ENCODE measurements at regions of chrX and their contacts with region 1.

Region 1: DNA sequence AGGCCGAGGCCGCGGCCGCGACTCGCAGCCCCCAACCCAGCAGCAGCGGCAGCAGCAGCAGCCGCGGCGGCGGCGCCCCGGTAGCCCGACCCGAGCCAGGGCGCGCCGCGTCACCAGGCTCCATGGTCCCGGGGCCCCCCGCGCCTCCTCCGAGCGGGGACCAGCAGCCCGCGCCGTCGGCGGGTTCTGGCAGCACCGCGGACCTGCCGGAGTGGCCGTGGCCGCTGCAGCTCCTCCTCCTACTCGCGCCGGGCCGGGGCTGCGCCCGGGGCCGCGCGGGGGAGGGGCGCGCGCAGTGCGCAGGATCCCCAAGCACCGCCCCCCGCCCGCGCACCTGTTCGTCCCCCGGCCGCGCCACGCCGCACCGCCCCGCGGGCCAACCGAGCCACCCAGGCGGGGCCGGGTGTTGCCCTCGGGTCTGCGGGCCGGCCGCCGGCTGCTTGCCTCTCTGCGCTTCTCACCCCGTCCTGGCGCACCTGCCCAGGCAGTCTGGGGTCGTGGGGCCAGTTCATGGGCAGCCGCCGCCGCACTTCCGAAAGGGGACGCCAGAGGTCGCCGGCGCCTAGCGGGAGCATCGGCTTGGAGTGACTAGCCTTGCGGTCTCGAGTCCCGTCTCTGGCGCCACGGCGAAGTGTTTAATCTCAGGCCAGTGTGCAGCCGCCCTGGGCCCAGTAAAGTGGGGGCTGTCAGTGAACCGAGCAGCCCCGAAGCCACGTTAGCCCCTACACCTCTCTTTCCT is at the start of gene SLC9A7:
- DNase-seq: peak in 1 of 2 donors; percentile 83
- H3K4me3 ChIP-seq: peak within 1 kb of the TSS; percentile 59 to 67
- H3K27ac ChIP-seq: peak within 1 kb of the TSS in 1 of 2 donors; percentile 5
- H3K4me1 ChIP-seq: peaks cover 0 to 4% of the 10 kb centered on the region in 2 donors
- H3K27me3 ChIP-seq: no peaks in the 10 kb centered on the region
- CTCF ChIP-seq: peak; percentile 75 to 86 (median 83)
- total RNA-seq, gene SLC9A7: 5.5 TPM

Region 2: DNA sequence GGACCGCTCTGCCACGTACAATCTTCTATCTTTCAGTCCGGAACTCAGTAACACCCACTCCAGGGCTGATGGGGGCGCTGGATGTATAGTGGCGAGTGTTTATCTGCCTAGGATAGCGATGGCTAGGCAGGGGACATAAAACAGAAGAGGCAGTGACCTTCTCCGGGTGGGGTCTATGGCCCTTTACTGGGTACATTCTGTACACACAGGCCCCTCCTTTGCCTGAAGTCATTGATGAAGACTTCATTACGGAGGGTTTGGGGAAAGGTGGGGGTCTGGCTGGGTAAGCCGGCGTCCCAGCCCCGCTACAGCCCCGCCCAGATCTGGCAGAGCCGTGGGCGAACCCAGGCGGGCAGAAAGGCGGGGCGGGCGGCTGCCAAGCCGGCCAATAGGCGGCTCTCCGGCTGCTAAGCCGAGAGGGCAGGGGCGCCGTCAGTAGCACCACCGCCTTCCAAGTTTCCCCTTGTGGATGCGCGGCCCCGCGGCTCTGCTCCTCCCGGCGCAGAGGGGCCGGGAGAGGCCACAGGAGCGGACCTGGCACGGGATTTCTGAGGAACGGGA is 185.7 kb before region 1 on chrX and contains the start of gene CHST7:
- intact Hi-C with region 1: loop called (anchors 10 kb)
- DNase-seq: peak in 1 of 2 donors; percentile 79
- H3K4me3 ChIP-seq: peak within 1 kb of the TSS; percentile 67 to 81
- H3K27ac ChIP-seq: peak within 1 kb of the TSS; percentile 57 to 67
- H3K4me1 ChIP-seq: no peaks in the 10 kb centered on the region
- H3K27me3 ChIP-seq: no peaks in the 10 kb centered on the region
- CTCF ChIP-seq: peak; percentile 8 to 16 (median 13)
- total RNA-seq, gene CHST7: 64.6 TPM

Region 3: GRCh38 chrX:46796574-46797191 is 37.6 kb after region 1 on chrX:
- intact Hi-C with region 1: loop called (anchors 1 kb)
- DNase-seq: peak; percentile 13 to 86
- H3K4me3 ChIP-seq: no peak overlapping the region
- H3K27ac ChIP-seq: no peak overlapping the region
- H3K4me1 ChIP-seq: no peaks in the 10 kb centered on the region
- H3K27me3 ChIP-seq: no peaks in the 10 kb centered on the region
- CTCF ChIP-seq: peak; percentile 55 to 71 (median 67)

Region 4: DNA sequence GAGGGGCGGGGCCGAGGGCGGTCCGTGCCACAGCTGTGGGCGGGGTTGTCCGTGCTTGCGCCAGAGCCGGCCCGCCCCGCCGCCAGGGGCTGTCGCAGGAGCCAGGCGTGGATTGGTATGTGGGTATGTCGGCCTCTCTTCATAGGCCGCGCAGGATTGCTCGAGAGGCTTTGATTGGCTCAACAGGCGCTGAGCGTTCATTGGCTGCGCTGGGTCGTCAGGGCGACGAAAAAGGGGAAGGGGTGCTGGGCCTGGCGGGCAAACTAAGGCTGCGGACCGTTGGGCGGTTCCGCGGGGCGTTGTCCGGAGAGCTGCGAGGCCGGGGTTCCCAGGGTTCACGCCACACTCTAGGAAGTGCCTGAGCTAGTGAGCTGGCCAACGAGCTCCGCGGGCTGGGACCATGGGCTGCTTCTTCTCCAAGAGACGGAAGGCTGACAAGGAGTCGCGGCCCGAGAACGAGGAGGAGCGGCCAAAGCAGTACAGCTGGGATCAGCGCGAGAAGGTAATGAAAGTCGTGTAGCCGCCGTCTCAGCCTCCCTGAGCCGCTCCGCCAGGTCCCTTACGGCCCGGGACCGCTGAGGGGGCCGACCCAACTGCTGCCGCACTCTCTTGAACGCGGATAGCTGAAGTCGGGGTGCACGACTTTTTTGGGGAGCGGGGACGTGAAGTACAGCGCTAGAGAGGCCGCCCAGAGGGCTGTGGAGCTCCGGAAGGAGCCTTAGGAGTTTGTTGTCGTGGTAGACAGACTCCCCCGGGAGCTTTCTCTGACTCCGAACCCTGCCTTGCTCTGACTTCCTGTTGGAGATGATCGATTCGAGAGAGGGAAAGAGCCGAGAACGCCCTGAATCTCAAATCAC is 77.9 kb after region 1 on chrX and contains the start of gene RP2:
- intact Hi-C with region 1: loop called (anchors 2 kb)
- DNase-seq: peak; percentile 86 to 96
- H3K4me3 ChIP-seq: peak within 1 kb of the TSS; percentile 69 to 75
- H3K27ac ChIP-seq: peak within 1 kb of the TSS; percentile 79 to 88
- H3K4me1 ChIP-seq: peaks cover 0 to 8% of the 10 kb centered on the region in 2 donors
- H3K27me3 ChIP-seq: no peaks in the 10 kb centered on the region
- CTCF ChIP-seq: no peak
- total RNA-seq, gene RP2: 6.6 TPM

Region 5: GRCh38 chrX:46912098-46912602 is 153.1 kb after region 1 on chrX and contains the start of gene JADE3:
- intact Hi-C with region 1: loop called (anchors 2 kb)
- DNase-seq: peak; percentile 13 to 82
- H3K4me3 ChIP-seq: peak within 1 kb of the TSS; percentile 65 to 81
- H3K27ac ChIP-seq: peak within 1 kb of the TSS; percentile 54 to 73
- H3K4me1 ChIP-seq: peaks cover 0 to 2% of the 10 kb centered on the region in 2 donors
- H3K27me3 ChIP-seq: no peaks in the 10 kb centered on the region
- CTCF ChIP-seq: no peak
- total RNA-seq, gene JADE3: 1.8 TPM

Region 6: GRCh38 chrX:47030339-47030738 is 271.3 kb after region 1 on chrX:
- intact Hi-C with region 1: loop called (anchors 5 kb)
- DNase-seq: no peak
- H3K4me3 ChIP-seq: no peak overlapping the region
- H3K27ac ChIP-seq: no peak overlapping the region
- H3K4me1 ChIP-seq: no peaks in the 10 kb centered on the region
- H3K27me3 ChIP-seq: no peaks in the 10 kb centered on the region
- CTCF ChIP-seq: peak; percentile 11 to 60 (median 49)